ENCODE measurements at regions of chr7 and their contacts with region 1.

Region 1: GRCh38 chr7:126026421-126027088 is 1096.9 kb upstream of the POT1 start:
- DNase-seq: no peak
- H3K4me3 ChIP-seq: no peak overlapping the region
- H3K27ac ChIP-seq: no peak overlapping the region
- H3K4me1 ChIP-seq: no peaks in the 10 kb centered on the region
- H3K27me3 ChIP-seq: no peaks in the 10 kb centered on the region
- CTCF ChIP-seq: no peak
- POLR2A ChIP-seq: no peak

Region 2: GRCh38 chr7:126103582-126103981 is 77.0 kb after region 1 on chr7:
- CTCF ChIA-PET with region 1: no interaction called
- POLR2A ChIA-PET with region 1: no interaction called
- dilution Hi-C with region 1: no loop called
- intact Hi-C with region 1: loop called (anchors 2 kb)
- DNase-seq: no peak
- H3K4me3 ChIP-seq: no peak overlapping the region
- H3K27ac ChIP-seq: no peak overlapping the region
- H3K4me1 ChIP-seq: no peaks in the 10 kb centered on the region
- H3K27me3 ChIP-seq: no peaks in the 10 kb centered on the region
- CTCF ChIP-seq: no peak
- POLR2A ChIP-seq: no peak